ENCODE measurements at regions of chr17 and their contacts with region 1.

Region 1: GRCh38 chr17:75319904-75320691 is 30.9 kb upstream of the SLC25A19 start:
- DNase-seq: peak; percentile 46
- H3K4me3 ChIP-seq: no peak overlapping the region
- H3K27ac ChIP-seq: peak overlapping the region; percentile 41 to 76 (median 46)
- H3K4me1 ChIP-seq: peaks cover 3 to 22% (median 4%) of the 10 kb centered on the region in 4 donors
- H3K27me3 ChIP-seq: no peaks in the 10 kb centered on the region
- CTCF ChIP-seq: no peak
- EP300 ChIP-seq: no peak
- POLR2A ChIP-seq: no peak

Region 2: GRCh38 chr17:75077496-75078283 is 242.4 kb before region 1 on chr17:
- in situ Hi-C with region 1: no loop called
- intact Hi-C with region 1: no loop called
- DNase-seq: peak; percentile 75
- H3K4me3 ChIP-seq: peak overlapping the region; percentile 2 to 39 (median 32)
- H3K27ac ChIP-seq: peak overlapping the region; percentile 80 to 88 (median 86)
- H3K4me1 ChIP-seq: peaks cover 38 to 51% (median 45%) of the 10 kb centered on the region in 4 donors
- H3K27me3 ChIP-seq: no peaks in the 10 kb centered on the region
- CTCF ChIP-seq: peak in 3 of 5 experiments; percentile 3 to 12 (median 4)
- EP300 ChIP-seq: no peak
- POLR2A ChIP-seq: peak; percentile 40

Region 3: DNA sequence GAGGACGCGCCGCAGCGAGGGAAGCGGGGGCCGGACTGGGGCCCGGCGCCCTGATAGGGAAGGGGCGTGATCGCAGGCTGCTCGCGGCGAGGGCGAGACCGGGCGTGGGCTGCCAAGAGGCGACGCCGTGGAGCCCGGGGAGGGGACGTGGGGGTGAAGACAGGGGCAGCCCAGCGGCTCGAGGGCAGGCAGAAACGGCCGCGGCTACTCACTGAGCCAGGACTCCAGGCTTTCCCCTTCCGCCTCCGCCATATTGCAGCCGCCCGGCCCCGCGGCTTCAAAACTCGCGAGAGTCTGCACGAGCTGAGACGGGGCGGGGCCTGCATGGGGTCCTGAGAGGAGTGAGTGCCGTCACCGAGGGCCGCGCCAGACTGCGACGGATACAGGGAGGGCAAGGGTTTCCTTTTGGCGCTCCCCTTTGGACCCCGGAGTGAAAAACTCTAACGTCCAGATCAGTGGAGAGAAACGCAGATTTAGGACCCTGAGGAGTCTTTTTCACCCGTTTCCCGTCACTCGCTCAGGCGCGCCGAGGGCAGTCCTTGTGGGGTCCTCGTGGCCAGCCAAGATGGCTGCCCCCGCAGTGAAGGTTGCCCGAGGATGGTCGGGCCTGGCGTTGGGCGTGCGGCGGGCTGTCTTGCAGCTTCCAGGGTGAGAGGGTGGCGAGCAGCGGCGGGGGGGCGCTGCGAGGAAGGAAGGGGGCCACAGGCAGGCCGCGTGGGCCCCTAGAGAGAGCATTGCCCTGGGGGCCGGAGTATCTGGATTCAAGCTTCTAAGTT is 58.6 kb before region 1 on chr17 and contains the starts of genes GGA3 and MRPS7:
- in situ Hi-C with region 1: no loop called
- intact Hi-C with region 1: no loop called
- DNase-seq: peak; percentile 95
- H3K4me3 ChIP-seq: peak within 1 kb of the TSS; percentile 68 to 90 (median 84)
- H3K27ac ChIP-seq: peak within 1 kb of the TSS; percentile 89 to 96 (median 92)
- H3K4me1 ChIP-seq: peaks cover 12 to 36% (median 27%) of the 10 kb centered on the region in 4 donors
- H3K27me3 ChIP-seq: no peaks in the 10 kb centered on the region
- CTCF ChIP-seq: no peak
- EP300 ChIP-seq: no peak
- POLR2A ChIP-seq: peak; percentile 71
- total RNA-seq, gene GGA3: 36.2 to 134 (median 59.0) TPM
- total RNA-seq, gene MRPS7: 27.1 to 54.0 (median 37.4) TPM

Region 4: GRCh38 chr17:75412455-75413317 is 92.6 kb after region 1 on chr17:
- in situ Hi-C with region 1: loop called (anchors 5 to 25 kb)
- intact Hi-C with region 1: no loop called
- DNase-seq: peak; percentile 72
- H3K4me3 ChIP-seq: peak overlapping the region in 1 of 4 donors; percentile 17
- H3K27ac ChIP-seq: no peak overlapping the region
- H3K4me1 ChIP-seq: peaks cover 0 to 9% (median 2%) of the 10 kb centered on the region in 4 donors
- H3K27me3 ChIP-seq: peaks cover 3% of the 10 kb centered on the region
- CTCF ChIP-seq: peak; percentile 72 to 87 (median 75)
- EP300 ChIP-seq: no peak
- POLR2A ChIP-seq: no peak